SK-N-SH (cell line): ENCODE measurements at regions of chr10 and their contacts with region 1.

Region 1: GRCh38 chr10:104291439-104291951 is 22.5 kb downstream of the GSTO2 start:
- DNase-seq: peak; percentile 91
- H3K4me3 ChIP-seq: peak overlapping the region; percentile 7 to 46; a peak in 2 of 4 replicates
- H3K27ac ChIP-seq: peak overlapping the region in 1 of 2 experiments; percentile 19; a peak in 1 of 4 replicates
- H3K4me1 ChIP-seq: peaks cover 0 to 2% of the 10 kb centered on the region in 2 experiments; a peak in 1 of 4 replicates
- H3K27me3 ChIP-seq: no peaks in the 10 kb centered on the region
- CTCF ChIP-seq: peak; percentile 99
- EP300 ChIP-seq: no peak; a peak in 1 of 4 replicates
- RAD21 ChIP-seq: peak; percentile 84

Region 2: GRCh38 chr10:104274762-104275721 is 16.5 kb before region 1 on chr10:
- CTCF ChIA-PET with region 1: interaction called, 118 read pairs
- POLR2A ChIA-PET with region 1: no interaction called
- DNase-seq: peak; percentile 79
- H3K4me3 ChIP-seq: peak overlapping the region in 1 of 2 experiments; percentile 41; a peak in 1 of 4 replicates
- H3K27ac ChIP-seq: peak overlapping the region in 1 of 2 experiments; percentile 76; a peak in 1 of 4 replicates
- H3K4me1 ChIP-seq: peaks cover 2 to 11% of the 10 kb centered on the region in 2 experiments; a peak in 2 of 4 replicates
- H3K27me3 ChIP-seq: no peaks in the 10 kb centered on the region
- CTCF ChIP-seq: peak; percentile 53
- EP300 ChIP-seq: no peak
- RAD21 ChIP-seq: peak; percentile 39

Region 3: DNA sequence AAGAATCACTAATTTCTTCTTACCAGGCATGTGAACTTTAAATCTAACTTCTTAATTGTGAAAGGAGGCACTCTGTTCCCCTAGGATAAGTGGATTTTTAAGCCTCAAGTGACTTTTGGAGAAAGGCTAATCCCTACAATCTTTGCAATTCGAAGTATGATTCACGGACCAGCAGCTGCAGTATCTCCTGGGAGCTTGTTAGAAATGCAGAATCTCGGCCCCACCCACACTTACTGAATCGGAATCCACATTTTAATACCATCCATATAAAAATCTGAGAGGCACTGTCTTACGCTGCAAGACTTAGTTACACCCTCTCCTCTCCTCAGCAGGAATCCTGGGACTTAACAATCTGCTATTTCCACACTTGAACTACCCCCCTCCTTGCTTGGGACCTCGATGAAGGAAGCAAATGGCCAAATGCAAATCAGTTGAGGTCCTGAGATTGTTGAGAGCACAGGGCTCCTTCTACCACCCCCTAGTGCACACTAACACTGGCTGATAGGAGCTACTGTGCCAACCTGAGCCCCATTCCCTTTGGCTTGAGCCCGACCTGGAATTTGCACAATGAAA is 25.8 kb after region 1 on chr10:
- CTCF ChIA-PET with region 1: interaction called, 25 read pairs
- POLR2A ChIA-PET with region 1: no interaction called
- DNase-seq: no peak
- H3K4me3 ChIP-seq: no peak overlapping the region
- H3K27ac ChIP-seq: peak overlapping the region in 1 of 2 experiments; percentile 21; a peak in 1 of 4 replicates
- H3K4me1 ChIP-seq: peaks cover 13 to 32% of the 10 kb centered on the region in 2 experiments; a peak in 2 of 4 replicates
- H3K27me3 ChIP-seq: no peaks in the 10 kb centered on the region
- CTCF ChIP-seq: no peak
- EP300 ChIP-seq: no peak
- RAD21 ChIP-seq: no peak

Region 4: DNA sequence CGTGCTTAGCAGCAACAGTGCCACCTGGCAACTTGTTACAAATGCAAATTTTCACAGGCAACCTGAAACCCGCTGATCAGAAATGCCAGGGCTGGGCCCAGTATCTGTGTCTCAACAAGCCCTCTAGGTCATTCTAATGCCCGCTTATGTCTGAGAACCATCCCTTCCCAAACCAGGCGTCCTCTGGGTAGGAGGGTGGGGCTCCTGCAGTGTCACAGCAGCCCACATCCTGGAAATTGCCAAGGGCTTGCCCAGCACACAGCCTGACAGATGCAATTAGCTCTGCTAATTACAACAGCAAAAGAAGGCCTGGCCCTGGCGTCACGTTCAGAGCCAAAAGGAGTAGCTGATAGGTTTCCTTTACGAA is 30.9 kb after region 1 on chr10:
- CTCF ChIA-PET with region 1: interaction called, 18 read pairs
- POLR2A ChIA-PET with region 1: no interaction called
- DNase-seq: peak; percentile 50
- H3K4me3 ChIP-seq: no peak overlapping the region
- H3K27ac ChIP-seq: peak overlapping the region in 1 of 2 experiments; percentile 41; a peak in 1 of 4 replicates
- H3K4me1 ChIP-seq: peaks cover 26 to 45% of the 10 kb centered on the region in 2 experiments; a peak in 3 of 4 replicates
- H3K27me3 ChIP-seq: no peaks in the 10 kb centered on the region
- CTCF ChIP-seq: no peak
- EP300 ChIP-seq: no peak
- RAD21 ChIP-seq: no peak

Region 5: DNA sequence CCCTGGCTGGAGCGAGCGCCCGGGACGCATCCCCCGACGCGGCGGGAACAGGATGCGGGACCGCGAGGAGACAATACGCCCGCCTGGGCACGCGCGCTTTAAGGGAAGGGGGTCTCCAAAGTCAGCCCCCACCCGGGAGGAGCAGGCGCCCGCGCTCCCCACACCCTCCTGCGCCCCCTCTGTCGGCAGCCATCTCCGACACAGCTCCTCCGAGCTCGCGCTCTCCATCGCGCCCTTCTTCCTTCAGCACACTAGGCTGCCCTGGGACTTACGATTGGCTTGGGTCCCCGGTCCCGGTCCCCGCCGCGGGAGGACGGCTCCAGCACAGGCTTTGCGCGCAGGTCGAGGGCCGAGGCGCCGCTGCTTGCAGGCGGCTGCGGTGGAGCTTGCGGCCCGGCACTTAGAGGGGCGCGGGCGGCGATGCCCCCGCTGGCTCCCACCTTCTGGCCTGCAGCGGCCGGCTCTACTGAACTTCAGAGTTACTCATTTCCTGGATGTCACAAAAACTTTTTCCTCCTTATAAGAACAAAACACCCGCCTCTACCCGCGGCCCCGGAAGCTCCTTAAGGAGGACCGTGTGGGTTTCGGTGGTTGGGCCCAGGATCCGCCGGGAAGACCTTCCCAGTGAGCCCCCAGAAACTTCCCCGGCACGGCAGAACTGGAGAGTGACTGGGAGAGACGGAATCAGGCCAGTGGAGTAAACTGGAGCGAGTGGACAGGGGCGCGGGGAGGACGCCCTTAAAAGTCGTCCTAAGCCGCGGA is 46.7 kb after region 1 on chr10 and contains the start of gene ITPRIP:
- CTCF ChIA-PET with region 1: interaction called, 65 read pairs
- POLR2A ChIA-PET with region 1: no interaction called
- DNase-seq: peak; percentile 86
- H3K4me3 ChIP-seq: peak within 1 kb of the TSS; percentile 78 to 94
- H3K27ac ChIP-seq: peak within 1 kb of the TSS; percentile 78 to 98
- H3K4me1 ChIP-seq: peaks cover 16 to 22% of the 10 kb centered on the region in 2 experiments; a peak in 2 of 4 replicates
- H3K27me3 ChIP-seq: no peaks in the 10 kb centered on the region
- CTCF ChIP-seq: peak; percentile 38
- EP300 ChIP-seq: peak in 1 of 2 experiments; percentile 34; a peak in 1 of 4 replicates
- RAD21 ChIP-seq: no peak
- polyA plus RNA-seq, gene ITPRIP: 20.2 and 22.1 TPM in 2 replicates

Region 6: DNA sequence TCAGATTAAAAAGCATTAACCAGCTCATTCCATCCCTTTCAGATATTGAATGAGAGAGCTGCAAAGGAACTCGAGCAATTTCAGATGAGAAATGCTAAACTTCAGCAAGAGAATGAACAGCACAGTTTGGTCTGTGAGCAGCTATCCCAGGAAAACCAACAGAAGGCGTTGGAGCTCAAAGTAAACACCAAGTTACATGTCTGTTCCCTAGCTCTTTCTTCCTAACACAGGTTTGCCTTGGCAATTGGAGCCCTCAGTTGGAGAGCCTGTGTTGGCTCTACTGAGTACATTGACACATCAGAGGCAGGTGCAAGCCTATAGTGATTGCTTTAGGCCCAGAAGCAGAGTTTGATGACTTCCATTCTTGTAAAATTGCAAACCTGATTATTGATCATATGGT is 76.9 kb after region 1 on chr10:
- CTCF ChIA-PET with region 1: interaction called, 11 read pairs
- POLR2A ChIA-PET with region 1: no interaction called
- DNase-seq: no peak
- H3K4me3 ChIP-seq: no peak overlapping the region
- H3K27ac ChIP-seq: no peak overlapping the region
- H3K4me1 ChIP-seq: no peaks in the 10 kb centered on the region; a peak in 1 of 4 replicates
- H3K27me3 ChIP-seq: no peaks in the 10 kb centered on the region
- CTCF ChIP-seq: no peak
- EP300 ChIP-seq: no peak
- RAD21 ChIP-seq: no peak

Region 7: GRCh38 chr10:104380336-104380735 is 88.8 kb after region 1 on chr10:
- CTCF ChIA-PET with region 1: interaction called, 19 read pairs
- POLR2A ChIA-PET with region 1: no interaction called
- DNase-seq: no peak
- H3K4me3 ChIP-seq: no peak overlapping the region
- H3K27ac ChIP-seq: no peak overlapping the region
- H3K4me1 ChIP-seq: no peaks in the 10 kb centered on the region
- H3K27me3 ChIP-seq: no peaks in the 10 kb centered on the region; the same call in 1 of the 2 replicates
- CTCF ChIP-seq: no peak
- EP300 ChIP-seq: no peak
- RAD21 ChIP-seq: no peak

Region 8: DNA sequence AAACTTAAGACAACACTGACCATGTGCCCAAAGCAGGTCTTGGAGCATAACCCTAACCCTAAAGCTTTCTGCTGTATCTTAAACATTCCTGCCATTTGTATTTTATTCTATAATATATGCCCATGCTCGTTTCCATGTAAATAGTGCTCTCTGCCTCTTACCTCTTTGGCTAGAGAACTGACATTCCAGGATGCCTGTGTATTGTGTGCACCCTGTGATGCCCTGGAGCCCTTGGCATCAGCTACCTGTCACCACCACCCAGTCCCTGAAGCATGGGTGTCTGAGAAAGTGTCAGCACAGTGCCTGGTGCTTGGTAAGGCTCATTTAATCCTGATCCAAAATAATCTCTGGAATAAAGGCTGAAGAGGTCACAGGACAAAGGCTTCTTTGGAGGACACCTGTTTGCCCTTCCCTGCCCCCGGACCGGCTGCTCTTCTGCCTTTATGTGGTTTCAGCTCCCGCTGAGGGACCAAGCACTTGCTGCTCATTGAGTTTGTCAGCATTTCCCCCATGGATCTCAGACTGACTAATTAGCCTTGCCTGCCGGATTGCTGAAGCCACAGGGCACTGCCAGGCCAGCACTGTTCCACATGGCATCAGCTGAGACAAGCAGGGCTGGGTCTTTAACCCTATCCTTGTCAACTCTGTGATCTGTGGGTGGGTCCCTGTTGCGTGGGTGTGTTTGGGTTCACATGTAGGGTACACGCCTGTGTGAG is 210.5 kb after region 1 on chr10:
- CTCF ChIA-PET with region 1: no interaction called
- POLR2A ChIA-PET with region 1: no interaction called
- DNase-seq: peak; percentile 59
- H3K4me3 ChIP-seq: no peak overlapping the region
- H3K27ac ChIP-seq: peak overlapping the region in 1 of 2 experiments; percentile 84; a peak in 2 of 4 replicates
- H3K4me1 ChIP-seq: peaks cover 0 to 33% of the 10 kb centered on the region in 2 experiments; a peak in 2 of 4 replicates
- H3K27me3 ChIP-seq: no peaks in the 10 kb centered on the region
- CTCF ChIP-seq: no peak
- EP300 ChIP-seq: no peak
- RAD21 ChIP-seq: no peak